Keratinocyte (primary cell): ENCODE measurements at regions of chr1 and their contacts with region 1.

Region 1: DNA sequence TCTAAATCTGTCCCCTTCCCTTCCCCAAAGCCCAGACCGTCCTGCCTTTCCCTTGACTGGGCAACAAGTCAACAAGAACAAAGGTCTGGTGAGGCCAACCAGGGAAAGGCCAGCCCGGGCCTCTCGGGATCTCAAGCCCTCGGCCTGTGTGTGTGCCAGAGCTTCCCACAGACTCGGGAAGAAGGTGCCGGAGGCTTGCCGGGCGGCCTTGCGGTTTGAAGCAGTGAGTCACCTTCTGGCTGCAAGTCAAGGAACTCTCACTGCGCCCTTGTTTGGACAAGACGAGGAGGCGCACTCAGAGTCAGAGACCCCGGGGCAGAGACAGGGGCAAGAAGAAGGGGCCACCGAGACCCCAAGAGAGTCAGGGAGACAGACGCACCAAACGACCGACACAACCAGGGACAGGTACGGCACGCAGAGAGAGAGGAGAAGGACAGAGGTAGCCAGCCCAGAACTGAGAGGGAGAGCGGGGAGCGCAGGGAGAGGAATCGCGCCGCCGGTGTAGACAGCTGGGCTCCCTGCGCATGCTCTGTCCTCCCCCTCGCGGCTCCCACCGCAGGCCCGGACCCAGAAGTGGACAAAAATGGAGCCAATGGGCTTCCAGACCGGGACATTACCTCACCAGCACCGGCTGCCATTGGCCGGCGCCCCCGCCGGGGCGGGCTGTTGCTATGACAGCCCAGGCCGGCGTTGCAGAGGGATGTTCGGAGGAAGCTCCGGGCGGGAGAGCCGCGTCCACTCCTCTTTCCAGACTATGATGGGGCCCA is 66.6 kb upstream of the LAPTM5 start:
- DNase-seq: peak; percentile 92
- H3K4me3 ChIP-seq: peak overlapping the region; percentile 35 to 57 (median 41)
- H3K27ac ChIP-seq: peak overlapping the region; percentile 32
- H3K4me1 ChIP-seq: peaks cover 15% of the 10 kb centered on the region
- H3K27me3 ChIP-seq: peaks cover 51% of the 10 kb centered on the region
- CTCF ChIP-seq: no peak

Region 2: DNA sequence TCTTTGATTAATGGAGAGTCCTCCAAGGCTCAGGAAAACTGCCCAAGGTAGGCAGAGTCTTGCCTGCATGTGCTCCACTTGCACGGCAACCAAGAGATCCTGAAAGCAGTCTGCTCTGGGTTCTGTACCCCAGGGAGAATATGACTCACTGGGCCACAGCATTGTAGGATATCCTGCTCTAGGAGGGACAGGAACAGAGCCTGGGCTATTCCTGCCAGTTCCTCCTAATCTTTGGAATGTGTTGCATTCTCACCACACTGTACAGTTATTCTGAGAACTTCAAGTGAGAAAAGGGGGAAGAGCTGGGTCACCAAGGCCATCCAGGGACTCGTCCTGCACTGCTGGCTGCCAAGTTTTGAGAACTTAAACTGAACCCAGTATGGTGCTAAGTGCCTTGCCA is 379.3 kb before region 1 on chr1:
- dilution Hi-C with region 1: no loop called
- DNase-seq: no peak
- H3K4me3 ChIP-seq: no peak overlapping the region
- H3K27ac ChIP-seq: no peak overlapping the region
- H3K4me1 ChIP-seq: peaks cover 7% of the 10 kb centered on the region
- H3K27me3 ChIP-seq: no peaks in the 10 kb centered on the region
- CTCF ChIP-seq: no peak

Region 3: DNA sequence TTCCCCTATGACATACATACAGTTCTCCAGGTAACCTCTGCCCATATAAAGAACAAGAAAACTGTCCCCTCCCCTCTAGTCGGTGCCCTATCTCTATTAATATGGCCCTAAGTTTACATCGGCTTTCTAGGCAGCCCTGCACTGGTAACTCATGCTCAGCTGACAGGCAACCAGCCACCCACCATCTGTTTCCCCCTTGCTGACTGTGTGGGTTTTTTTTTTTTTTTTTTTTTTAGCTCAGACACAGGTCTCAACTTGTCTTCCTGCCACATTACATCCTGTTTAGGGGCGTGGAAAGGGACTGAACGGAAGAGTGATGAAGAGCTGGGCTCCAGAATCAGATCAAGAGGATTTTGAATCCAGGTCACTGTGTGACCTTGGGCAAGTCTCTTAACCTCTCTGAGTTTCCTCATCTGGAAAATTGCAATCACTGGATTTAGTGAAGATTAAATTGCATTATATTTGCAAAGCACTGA is 80.5 kb before region 1 on chr1:
- dilution Hi-C with region 1: no loop called
- DNase-seq: no peak
- H3K4me3 ChIP-seq: no peak overlapping the region
- H3K27ac ChIP-seq: no peak overlapping the region
- H3K4me1 ChIP-seq: peaks cover 36% of the 10 kb centered on the region
- H3K27me3 ChIP-seq: no peaks in the 10 kb centered on the region
- CTCF ChIP-seq: no peak

Region 4: GRCh38 chr1:30911046-30911954 is 87.1 kb after region 1 on chr1:
- dilution Hi-C with region 1: loop called (anchors 25 kb)
- DNase-seq: peak; percentile 58
- H3K4me3 ChIP-seq: no peak overlapping the region
- H3K27ac ChIP-seq: no peak overlapping the region
- H3K4me1 ChIP-seq: peaks cover 28% of the 10 kb centered on the region
- H3K27me3 ChIP-seq: peaks cover 6% of the 10 kb centered on the region
- CTCF ChIP-seq: peak; percentile 87 to 92 (median 92)